CD14-positive monocyte (primary cell): ENCODE measurements at regions of chr9 and their contacts with region 1.

Region 1: DNA sequence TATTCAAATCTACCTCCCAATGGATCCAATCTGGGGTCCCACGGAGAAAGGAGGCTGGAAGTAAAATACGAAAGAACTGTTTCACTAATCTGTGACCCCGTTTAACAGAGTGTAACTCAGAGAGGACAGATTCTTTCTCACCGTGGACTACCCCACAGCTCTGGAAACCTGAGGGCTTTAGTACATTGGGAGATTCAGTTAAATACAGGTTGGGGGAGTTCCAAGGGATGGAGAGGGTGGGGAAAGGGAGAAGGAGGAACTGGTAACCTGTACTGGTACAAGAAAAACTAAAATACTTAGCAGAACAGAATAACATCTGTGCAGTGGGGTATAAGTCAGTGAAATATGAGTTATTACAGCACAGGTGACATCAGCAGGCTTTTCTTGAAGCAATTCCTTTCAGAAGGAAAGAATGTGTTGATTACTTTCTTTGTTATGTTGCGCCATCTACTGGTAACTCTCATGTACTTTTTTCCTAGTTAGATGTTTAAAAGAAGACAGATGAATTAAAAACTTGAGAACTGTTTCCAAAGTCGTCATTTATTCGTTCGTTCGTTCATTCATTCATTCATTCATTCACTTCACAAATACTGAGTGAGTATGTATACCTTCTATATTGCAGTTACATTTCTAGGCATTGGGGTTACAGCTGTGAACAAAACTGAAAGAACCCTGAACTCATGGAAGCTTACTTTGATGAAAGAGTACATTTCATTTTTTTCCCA is 30.0 kb upstream of the STOM start:
- DNase-seq: peak; percentile 44 to 75 (median 65)
- H3K4me3 ChIP-seq: no peak overlapping the region
- H3K4me3 Mint-ChIP-seq: no peak overlapping the region
- H3K27ac ChIP-seq: no peak overlapping the region
- H3K27ac Mint-ChIP-seq: no peak overlapping the region
- H3K4me1 ChIP-seq: peaks cover 0 to under 1% of the 10 kb centered on the region in 2 donors
- H3K4me1 Mint-ChIP-seq: peaks cover 3% of the 10 kb centered on the region
- H3K27me3 ChIP-seq: no peaks in the 10 kb centered on the region
- H3K27me3 Mint-ChIP-seq: no peaks in the 10 kb centered on the region
- CTCF ChIP-seq: peak; percentile 81

Region 2: DNA sequence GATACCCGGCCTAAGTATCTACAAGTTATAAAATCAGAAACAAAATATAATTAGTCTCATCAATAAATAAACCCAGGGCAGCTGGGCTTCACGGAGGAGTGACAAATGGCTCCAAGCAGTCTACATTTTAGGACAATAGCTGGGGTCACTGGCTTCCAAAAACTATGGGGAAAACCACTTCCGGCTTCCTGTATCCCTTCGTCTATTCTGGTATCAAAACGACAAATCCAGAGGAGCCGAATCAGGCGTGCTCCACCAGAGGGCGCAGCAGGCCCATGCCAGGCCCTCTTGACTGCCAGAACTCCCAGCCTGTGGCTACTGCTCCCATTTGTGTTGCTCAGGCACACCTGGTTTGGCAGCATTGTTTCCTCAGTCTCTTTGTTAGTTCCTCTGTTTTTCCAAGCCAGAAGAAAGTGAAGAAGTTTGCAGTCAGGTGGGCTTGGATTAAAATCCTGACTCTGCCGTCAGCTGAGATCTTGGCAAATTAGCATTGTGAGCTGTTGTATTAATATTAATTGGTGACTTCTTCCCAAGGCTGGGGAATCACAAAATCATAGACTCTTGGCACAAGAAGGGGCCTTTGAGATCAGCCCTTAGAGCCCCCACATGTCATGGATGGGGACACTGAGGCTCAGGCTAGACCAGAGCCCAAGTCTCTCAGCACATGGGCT is 186.8 kb before region 1 on chr9:
- intact Hi-C with region 1: loop called (anchors 5 kb)
- DNase-seq: peak; percentile 67 to 89 (median 83)
- H3K4me3 ChIP-seq: no peak overlapping the region
- H3K4me3 Mint-ChIP-seq: no peak overlapping the region
- H3K27ac ChIP-seq: no peak overlapping the region
- H3K27ac Mint-ChIP-seq: peak overlapping the region in 4 of 7 donors; percentile 19 to 71 (median 32)
- H3K4me1 ChIP-seq: peaks cover 24 to 27% of the 10 kb centered on the region in 2 donors
- H3K4me1 Mint-ChIP-seq: peaks cover 26% of the 10 kb centered on the region
- H3K27me3 ChIP-seq: no peaks in the 10 kb centered on the region
- H3K27me3 Mint-ChIP-seq: peaks cover 0 to 4% (median 0%) of the 10 kb centered on the region in 3 donors
- CTCF ChIP-seq: peak; percentile 97

Region 3: GRCh38 chr9:121322037-121322775 is 77.8 kb before region 1 on chr9:
- intact Hi-C with region 1: loop called (anchors 1 to 2 kb)
- DNase-seq: no peak
- H3K4me3 ChIP-seq: no peak overlapping the region
- H3K4me3 Mint-ChIP-seq: no peak overlapping the region
- H3K27ac ChIP-seq: no peak overlapping the region
- H3K27ac Mint-ChIP-seq: peak overlapping the region in 2 of 7 donors; percentile 5 to 26
- H3K4me1 ChIP-seq: peaks cover 18 to 31% of the 10 kb centered on the region in 2 donors
- H3K4me1 Mint-ChIP-seq: peaks cover 31% of the 10 kb centered on the region
- H3K27me3 ChIP-seq: no peaks in the 10 kb centered on the region
- H3K27me3 Mint-ChIP-seq: peaks cover 0 to 1% (median 0%) of the 10 kb centered on the region in 3 donors
- CTCF ChIP-seq: no peak

Region 4: DNA sequence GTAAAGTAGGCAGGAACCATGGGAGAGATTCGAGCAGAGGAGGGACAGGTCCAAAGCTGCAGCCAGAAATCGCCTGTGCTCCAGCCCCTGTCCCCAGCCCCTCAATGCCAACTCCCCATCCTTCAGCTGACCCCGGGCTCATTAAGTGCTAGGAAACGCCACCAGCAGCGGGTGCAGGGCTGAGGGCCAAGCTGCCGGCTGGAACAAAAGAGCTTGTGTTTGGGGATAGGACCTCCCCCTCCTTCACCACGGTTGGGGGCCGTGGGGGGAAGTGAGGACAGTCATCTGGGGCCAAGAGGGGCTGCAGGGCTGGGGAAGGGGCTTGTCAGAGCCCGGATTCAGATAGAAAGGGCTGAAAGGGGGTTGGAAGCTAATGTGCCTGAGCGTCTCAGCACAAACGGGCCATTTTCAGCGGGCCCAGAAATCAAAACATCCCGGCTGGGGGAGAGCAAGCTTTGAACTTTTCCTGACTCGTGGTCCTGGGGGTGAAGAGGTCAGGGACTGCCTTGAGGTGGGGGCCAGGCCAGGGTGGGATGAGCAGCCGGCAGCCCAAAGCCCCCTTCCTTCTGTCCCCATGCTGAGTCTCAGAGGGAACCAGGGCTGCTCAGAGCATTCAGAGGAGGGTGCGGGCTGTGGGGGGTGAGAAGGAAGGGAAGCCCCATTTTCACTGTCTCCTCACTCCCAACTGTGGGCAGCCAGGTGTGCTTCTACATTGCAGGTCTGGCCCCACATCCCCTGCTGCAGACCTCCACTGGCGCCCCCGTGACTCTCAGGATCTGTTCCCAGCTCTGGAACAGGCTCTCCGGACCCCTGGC is 181.9 kb after region 1 on chr9:
- intact Hi-C with region 1: no loop called
- DNase-seq: no peak
- H3K4me3 ChIP-seq: no peak overlapping the region
- H3K4me3 Mint-ChIP-seq: no peak overlapping the region
- H3K27ac ChIP-seq: no peak overlapping the region
- H3K27ac Mint-ChIP-seq: no peak overlapping the region
- H3K4me1 ChIP-seq: no peaks in the 10 kb centered on the region
- H3K4me1 Mint-ChIP-seq: no peaks in the 10 kb centered on the region
- H3K27me3 ChIP-seq: peaks cover 0 to 21% of the 10 kb centered on the region in 2 donors
- H3K27me3 Mint-ChIP-seq: peaks cover 25 to 39% (median 29%) of the 10 kb centered on the region in 3 donors
- CTCF ChIP-seq: no peak